H1 (cell line): ENCODE measurements at regions of chr5 and their contacts with region 1.

Region 1: DNA sequence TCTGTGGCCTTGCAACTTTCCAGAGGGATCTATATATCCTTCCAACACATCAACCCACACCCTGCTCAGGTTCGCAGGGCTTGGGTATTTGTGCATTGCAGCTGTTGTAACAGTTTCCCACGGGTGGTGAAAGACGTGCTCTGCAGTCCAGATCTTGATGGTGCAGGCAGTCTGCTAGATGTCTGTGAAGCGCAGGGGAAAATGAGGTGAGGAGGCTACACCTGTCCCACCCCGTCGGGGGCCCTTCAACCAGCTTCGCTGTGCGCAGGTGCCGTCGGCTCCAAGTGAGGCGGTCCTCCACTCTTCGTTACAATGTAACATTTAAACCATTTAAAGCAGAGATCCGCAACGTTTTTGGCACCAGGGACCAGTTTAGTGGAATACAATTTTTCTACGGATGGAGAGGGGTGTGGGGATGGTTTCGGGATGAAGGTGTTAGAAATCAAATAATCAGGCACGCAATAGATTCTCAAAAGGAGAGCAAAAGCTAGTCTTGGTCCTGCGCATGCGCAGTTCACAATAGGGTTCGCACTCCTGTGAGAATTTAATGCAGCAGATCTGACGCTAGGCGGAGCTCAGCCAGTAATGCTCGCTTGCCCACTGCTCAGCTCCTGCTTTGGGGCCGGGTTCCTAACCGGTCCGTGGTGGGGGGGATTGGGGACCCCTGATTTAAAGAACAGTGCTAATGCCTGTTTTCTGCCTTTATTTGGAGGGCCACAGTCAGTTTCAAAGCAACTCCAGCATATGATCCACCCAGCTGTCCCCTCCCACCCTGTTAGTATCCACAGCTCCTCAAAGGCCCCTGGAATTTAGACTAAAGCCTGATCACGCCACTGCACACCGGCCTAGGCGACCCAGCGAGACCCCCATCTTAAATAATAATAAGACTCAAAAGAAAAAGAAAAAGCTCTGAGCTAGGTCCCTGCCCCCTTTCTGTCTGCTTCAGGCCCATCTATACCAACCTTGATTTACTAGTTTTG is 97.1 kb upstream of the SELENOP start:
- DNase-seq: peak; percentile 47 to 88
- H3K4me3 ChIP-seq: peak overlapping the region; percentile 49 to 66 (median 55); a peak in 7 of 8 replicates
- H3K27ac ChIP-seq: no peak overlapping the region
- H3K4me1 ChIP-seq: no peaks in the 10 kb centered on the region; a peak in 1 of 7 replicates
- H3K27me3 ChIP-seq: peaks cover 0 to 12% (median 8%) of the 10 kb centered on the region in 4 experiments; a peak in 6 of 7 replicates
- CTCF ChIP-seq: peak; percentile 74 to 92 (median 89)
- EP300 ChIP-seq: no peak
- POLR2A ChIP-seq: no peak
- RAD21 ChIP-seq: peak; percentile 68 to 77

Region 2: GRCh38 chr5:42680046-42680445 is 228.8 kb before region 1 on chr5:
- CTCF ChIA-PET with region 1: no interaction called
- POLR2A ChIA-PET with region 1: no interaction called
- DNase-seq: no peak
- H3K4me3 ChIP-seq: no peak overlapping the region
- H3K27ac ChIP-seq: no peak overlapping the region
- H3K4me1 ChIP-seq: no peaks in the 10 kb centered on the region
- H3K27me3 ChIP-seq: no peaks in the 10 kb centered on the region
- CTCF ChIP-seq: no peak
- EP300 ChIP-seq: no peak
- POLR2A ChIP-seq: no peak
- RAD21 ChIP-seq: no peak

Region 3: DNA sequence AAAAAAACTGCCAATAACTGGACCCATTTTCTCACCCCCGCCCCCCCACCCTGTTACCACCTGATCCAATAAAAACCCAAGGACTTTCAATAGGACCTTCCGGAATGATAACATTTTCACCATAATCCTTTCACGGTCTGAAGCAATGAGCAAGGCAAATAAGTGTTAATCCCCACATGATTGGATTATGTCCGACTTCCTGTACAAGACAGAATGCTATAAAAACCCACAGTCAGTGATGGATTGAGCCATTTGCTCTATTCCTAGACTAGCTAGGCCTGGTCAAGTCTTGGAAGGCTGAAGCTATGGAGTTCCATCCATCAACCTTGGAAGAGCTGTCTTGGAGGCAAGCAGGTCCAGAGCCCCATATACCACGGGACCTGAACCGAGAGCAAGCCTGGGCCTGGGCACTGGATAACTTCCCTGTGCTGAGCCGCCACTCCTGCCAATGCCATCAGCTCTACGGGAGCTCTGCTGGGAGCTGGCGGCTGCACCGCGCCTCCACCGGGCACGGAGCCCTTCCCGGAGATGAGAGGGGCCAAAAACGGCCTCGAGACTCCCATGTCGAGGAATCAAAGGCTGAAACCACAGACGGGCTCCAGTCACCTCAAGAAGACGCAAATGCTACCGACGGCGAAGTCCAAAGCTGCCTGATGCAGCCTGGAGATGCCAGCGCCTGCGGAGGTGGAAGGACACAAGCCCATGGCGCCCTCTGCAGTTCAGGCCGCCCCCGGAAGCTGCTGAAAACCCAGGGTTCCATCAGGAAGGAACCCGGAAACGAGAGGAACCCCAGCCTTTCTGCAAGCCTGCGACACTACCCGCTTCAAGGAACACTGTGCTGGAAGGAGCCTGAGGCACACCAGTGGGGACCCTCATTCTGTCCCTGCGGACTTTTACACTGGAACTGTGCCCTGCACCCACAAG is 62.1 kb after region 1 on chr5:
- CTCF ChIA-PET with region 1: interaction called, 60 read pairs
- POLR2A ChIA-PET with region 1: no interaction called
- DNase-seq: peak in 1 of 2 experiments; percentile 84
- H3K4me3 ChIP-seq: no peak overlapping the region
- H3K27ac ChIP-seq: no peak overlapping the region
- H3K4me1 ChIP-seq: no peaks in the 10 kb centered on the region
- H3K27me3 ChIP-seq: no peaks in the 10 kb centered on the region
- CTCF ChIP-seq: peak; percentile 67 to 81 (median 76)
- EP300 ChIP-seq: no peak
- POLR2A ChIP-seq: no peak
- RAD21 ChIP-seq: peak; percentile 79 to 83

Region 4: DNA sequence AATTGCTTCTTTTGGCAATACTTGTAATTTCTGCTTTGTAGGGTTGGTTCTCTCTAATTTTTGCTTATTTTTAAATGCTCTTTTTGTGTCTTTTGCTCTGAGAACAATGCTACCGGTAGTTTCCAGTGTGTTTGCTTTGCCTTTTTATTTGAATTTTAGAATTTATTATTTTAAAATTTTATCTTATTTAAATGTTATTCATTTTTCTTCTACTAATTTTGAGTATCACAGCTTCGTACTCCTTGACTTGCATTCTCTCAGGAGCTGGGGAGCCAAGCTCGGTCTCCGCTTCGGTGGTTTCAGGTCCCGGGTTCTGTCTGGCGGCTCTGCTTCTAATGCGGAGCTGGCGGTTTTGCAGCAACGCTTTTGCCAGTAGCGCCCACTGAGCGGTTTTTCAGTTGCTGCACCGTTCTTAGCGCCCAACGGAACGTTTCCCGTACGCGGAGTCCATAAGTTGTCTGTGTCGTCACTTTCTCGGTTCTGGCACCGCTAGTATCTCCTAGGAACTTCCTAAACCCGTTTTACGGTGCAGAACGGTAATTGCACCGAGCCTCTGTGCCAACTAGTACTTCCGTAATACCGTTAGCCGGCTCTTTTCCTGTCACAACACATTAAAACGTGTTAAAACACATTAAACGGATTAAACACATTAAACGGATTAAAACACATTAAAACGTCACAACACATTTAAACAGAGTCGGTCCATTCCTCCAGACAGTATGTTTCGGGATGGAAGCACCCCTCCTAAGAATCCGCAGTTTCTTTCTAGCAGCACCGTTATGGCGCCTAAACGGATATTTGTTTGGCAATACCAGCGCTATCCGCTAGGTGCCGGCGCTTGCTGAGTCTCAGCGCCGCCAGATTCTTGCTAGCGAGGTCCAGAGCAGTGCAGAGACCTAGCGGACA is 85.7 kb after region 1 on chr5:
- CTCF ChIA-PET with region 1: interaction called, 10 read pairs
- POLR2A ChIA-PET with region 1: no interaction called
- DNase-seq: peak in 1 of 2 experiments; percentile 90
- H3K4me3 ChIP-seq: peak overlapping the region in 3 of 4 experiments; percentile 8 to 32 (median 16); a peak in 3 of 8 replicates
- H3K27ac ChIP-seq: no peak overlapping the region
- H3K4me1 ChIP-seq: peaks cover 3 to 9% (median 4%) of the 10 kb centered on the region in 4 experiments
- H3K27me3 ChIP-seq: peaks cover 78 to 100% (median 93%) of the 10 kb centered on the region in 4 experiments
- CTCF ChIP-seq: peak; percentile 69 to 96 (median 83)
- EP300 ChIP-seq: no peak
- POLR2A ChIP-seq: no peak
- RAD21 ChIP-seq: peak; percentile 52 to 71